HAP-1 (cell line): ENCODE measurements at regions of chr20 and their contacts with region 1.

Region 1: DNA sequence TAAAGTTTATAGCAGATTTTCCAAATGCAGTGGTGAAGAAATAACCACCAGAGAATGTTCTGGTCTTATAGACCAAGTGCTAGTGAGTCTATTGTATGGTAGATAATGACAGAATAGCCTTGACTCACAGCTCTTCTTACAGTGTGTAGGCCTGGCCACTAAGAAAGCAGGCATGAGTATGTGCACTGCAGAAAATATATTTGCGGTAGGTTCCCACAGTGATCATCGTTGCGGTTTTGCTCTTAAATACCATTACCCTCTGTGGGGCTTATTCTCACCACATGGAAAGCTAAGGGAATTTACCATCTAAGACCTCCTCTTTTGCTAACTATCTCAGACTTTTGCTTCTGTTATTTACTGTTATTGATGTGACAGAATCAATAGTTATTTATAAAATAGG is 212.3 kb upstream of the SYNDIG1 start:
- DNase-seq: no peak
- H3K4me3 ChIP-seq: no peak overlapping the region
- H3K4me1 ChIP-seq: no peaks in the 10 kb centered on the region
- H3K27me3 ChIP-seq: no peaks in the 10 kb centered on the region

Region 2: GRCh38 chr20:24160563-24161375 is 96.4 kb before region 1 on chr20:
- in situ Hi-C with region 1: loop called (anchors 25 kb)
- DNase-seq: peak in 1 of 2 experiments; percentile 32
- H3K4me3 ChIP-seq: no peak overlapping the region
- H3K4me1 ChIP-seq: no peaks in the 10 kb centered on the region
- H3K27me3 ChIP-seq: no peaks in the 10 kb centered on the region

Region 3: DNA sequence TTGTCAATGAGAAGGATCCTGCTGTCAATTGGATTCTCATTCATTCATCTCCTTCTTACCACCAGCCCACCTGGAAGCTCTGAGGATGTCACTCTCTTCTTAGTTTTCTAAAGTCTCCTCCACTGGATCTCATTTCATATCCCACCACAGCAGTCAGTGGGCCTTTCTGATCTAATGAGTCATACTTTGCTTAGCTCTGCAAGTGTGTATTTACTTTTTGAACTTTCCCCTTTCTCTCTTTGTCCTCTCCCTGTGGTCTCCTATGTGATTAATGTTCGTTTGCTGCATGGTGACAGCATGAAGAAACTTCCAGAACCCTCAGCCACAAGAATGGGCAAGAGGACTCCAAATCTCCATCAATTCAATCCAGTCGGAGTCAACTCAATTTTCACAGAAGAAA is 148.6 kb after region 1 on chr20:
- in situ Hi-C with region 1: no loop called
- DNase-seq: no peak
- H3K4me3 ChIP-seq: no peak overlapping the region
- H3K4me1 ChIP-seq: no peaks in the 10 kb centered on the region
- H3K27me3 ChIP-seq: no peaks in the 10 kb centered on the region